CD4-positive, alpha-beta T cell (primary cell): ENCODE measurements at regions of chr1 and their contacts with region 1.

Region 1: GRCh38 chr1:157496121-157496526 is 56.2 kb downstream of the FCRL5 start:
- DNase-seq: peak in 8 of 14 experiments; percentile 6 to 61 (median 28)
- ATAC-seq: peak; percentile 49
- H3K4me3 ChIP-seq: no peak overlapping the region
- H3K4me3 Mint-ChIP-seq: no peak overlapping the region
- H3K27ac ChIP-seq: no peak overlapping the region
- H3K27ac Mint-ChIP-seq: no peak overlapping the region
- H3K4me1 ChIP-seq: no peaks in the 10 kb centered on the region
- H3K4me1 Mint-ChIP-seq: no peaks in the 10 kb centered on the region
- H3K27me3 ChIP-seq: peaks cover 4 to 7% of the 10 kb centered on the region in 2 experiments
- H3K27me3 Mint-ChIP-seq: peaks cover 33% of the 10 kb centered on the region
- CTCF ChIP-seq: peak; percentile 87

Region 2: GRCh38 chr1:157369808-157370521 is 126.2 kb before region 1 on chr1:
- CTCF ChIA-PET with region 1: no interaction called
- POLR2A ChIA-PET with region 1: no interaction called
- intact Hi-C with region 1: loop called (anchors 5 kb)
- DNase-seq: peak in 8 of 14 experiments; percentile 4 to 62 (median 32)
- ATAC-seq: no peak
- H3K4me3 ChIP-seq: no peak overlapping the region
- H3K4me3 Mint-ChIP-seq: no peak overlapping the region
- H3K27ac ChIP-seq: no peak overlapping the region
- H3K27ac Mint-ChIP-seq: no peak overlapping the region
- H3K4me1 ChIP-seq: no peaks in the 10 kb centered on the region
- H3K4me1 Mint-ChIP-seq: no peaks in the 10 kb centered on the region
- H3K27me3 ChIP-seq: peaks cover 3 to 6% of the 10 kb centered on the region in 2 experiments
- H3K27me3 Mint-ChIP-seq: peaks cover 18% of the 10 kb centered on the region
- CTCF ChIP-seq: peak; percentile 95